HCT116 (cell line): ENCODE measurements at regions of chr9 and their contacts with region 1.

Region 1: DNA sequence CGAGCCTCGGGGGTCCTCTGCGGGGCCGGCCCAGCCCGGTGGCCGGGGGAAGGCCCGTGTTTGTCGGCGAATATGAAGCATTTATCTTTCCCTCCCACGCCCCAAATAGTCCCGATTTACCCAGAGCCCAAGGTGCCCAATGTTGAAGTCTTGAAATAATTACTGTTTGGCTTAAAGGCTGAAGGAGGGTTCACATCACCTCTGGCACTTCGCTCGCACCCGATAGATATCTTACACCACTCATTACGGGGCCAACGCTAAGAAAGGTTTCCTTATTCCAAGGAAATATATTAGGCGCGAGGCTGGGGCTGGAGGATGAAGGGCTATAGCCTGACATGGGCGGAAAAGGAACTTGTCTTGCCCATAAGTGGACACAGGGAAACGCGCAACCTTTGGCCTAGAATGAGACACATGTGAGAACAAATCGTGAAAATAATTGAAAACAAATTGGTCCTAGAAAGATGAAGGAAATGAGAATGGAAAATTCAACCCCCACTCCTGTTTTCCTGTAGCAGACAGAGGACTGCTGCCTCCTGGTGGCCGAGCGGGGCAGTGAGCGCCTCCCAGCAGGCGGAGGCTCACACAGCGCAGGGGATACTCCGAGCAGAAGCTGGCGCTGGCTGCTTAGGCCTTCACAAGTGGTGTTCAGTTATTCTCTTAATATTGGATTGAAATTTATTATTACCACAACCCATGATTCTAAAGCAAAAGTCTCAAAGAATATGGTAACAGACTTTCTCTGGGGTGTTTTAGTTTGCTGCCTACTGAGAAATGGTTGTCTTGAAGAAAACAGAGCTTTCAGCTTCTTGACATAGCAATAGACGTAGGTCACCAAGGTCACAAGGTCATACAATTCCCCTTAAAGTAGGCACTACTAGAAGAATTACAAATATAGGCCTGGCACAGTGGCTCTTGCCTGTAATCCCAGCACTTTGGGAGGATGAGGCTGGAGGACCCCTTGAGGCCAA is 7.9 kb downstream of the CCL21 start:
- DNase-seq: peak; percentile 48
- ATAC-seq: peak; percentile 83
- H3K4me3 ChIP-seq: peak overlapping the region; percentile 41 to 57
- H3K27ac ChIP-seq: no peak overlapping the region
- H3K4me1 ChIP-seq: peaks cover 3 to 14% of the 10 kb centered on the region in 2 experiments; a peak in 2 of 4 replicates
- H3K27me3 ChIP-seq: no peaks in the 10 kb centered on the region
- CTCF ChIP-seq: peak; percentile 96 to 99 (median 97)
- POLR2A ChIP-seq: no peak
- RAD21 ChIP-seq: peak; percentile 77

Region 2: DNA sequence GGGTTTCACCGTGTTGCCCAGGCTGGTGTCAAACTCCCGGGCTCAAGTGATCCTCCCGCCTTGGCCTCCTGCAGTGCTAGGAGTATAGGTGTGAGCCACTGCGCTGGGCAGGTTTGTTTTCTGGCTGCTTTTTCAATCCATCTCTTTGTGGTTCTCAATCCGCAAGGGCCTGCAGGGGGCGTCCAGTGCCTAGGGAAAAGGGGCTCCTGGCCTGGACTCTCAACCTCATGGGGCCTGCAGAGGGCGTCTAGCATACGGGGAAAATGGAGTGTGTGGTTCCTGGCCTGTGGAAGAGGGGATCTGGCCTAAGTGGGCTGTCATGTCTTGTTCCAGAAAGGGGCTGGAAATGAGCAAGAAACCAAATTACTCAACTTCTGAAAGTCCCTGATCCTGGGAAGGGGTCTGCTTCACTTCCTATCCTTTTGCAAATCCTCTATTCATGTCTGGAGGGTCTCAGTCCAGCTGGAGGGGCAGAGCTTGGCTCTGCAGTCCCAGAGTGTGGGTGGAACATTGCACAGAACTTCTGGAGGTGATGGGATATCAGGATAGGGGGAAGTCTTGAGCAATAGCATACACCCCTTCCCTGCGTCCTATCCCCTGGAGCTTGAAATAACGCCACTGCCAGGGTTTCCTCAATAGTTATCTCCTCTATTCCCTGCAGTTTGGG is 26.9 kb before region 1 on chr9:
- CTCF ChIA-PET with region 1: interaction called, 14 read pairs
- POLR2A ChIA-PET with region 1: no interaction called
- RAD21 ChIA-PET with region 1: no interaction called
- intact Hi-C with region 1: loop called (anchors 1 kb)
- DNase-seq: peak; percentile 60
- ATAC-seq: peak; percentile 99
- H3K4me3 ChIP-seq: no peak overlapping the region
- H3K27ac ChIP-seq: no peak overlapping the region
- H3K4me1 ChIP-seq: no peaks in the 10 kb centered on the region
- H3K27me3 ChIP-seq: no peaks in the 10 kb centered on the region
- CTCF ChIP-seq: peak; percentile 93 to 99 (median 96)
- POLR2A ChIP-seq: no peak
- RAD21 ChIP-seq: peak; percentile 83

Region 3: GRCh38 chr9:34715639-34716215 is 13.7 kb after region 1 on chr9:
- CTCF ChIA-PET with region 1: interaction called, 14 read pairs
- POLR2A ChIA-PET with region 1: no interaction called
- RAD21 ChIA-PET with region 1: no interaction called
- intact Hi-C with region 1: no loop called
- DNase-seq: no peak
- ATAC-seq: no peak
- H3K4me3 ChIP-seq: no peak overlapping the region
- H3K27ac ChIP-seq: no peak overlapping the region
- H3K4me1 ChIP-seq: no peaks in the 10 kb centered on the region
- H3K27me3 ChIP-seq: peaks cover 23% of the 10 kb centered on the region
- CTCF ChIP-seq: no peak
- POLR2A ChIP-seq: no peak
- RAD21 ChIP-seq: no peak

Region 4: GRCh38 chr9:34974664-34975063 is 272.6 kb after region 1 on chr9:
- CTCF ChIA-PET with region 1: no interaction called
- POLR2A ChIA-PET with region 1: no interaction called
- RAD21 ChIA-PET with region 1: no interaction called
- intact Hi-C with region 1: no loop called
- DNase-seq: no peak
- ATAC-seq: no peak
- H3K4me3 ChIP-seq: no peak overlapping the region
- H3K27ac ChIP-seq: no peak overlapping the region
- H3K4me1 ChIP-seq: no peaks in the 10 kb centered on the region
- H3K27me3 ChIP-seq: peaks cover 30% of the 10 kb centered on the region
- CTCF ChIP-seq: no peak
- POLR2A ChIP-seq: no peak
- RAD21 ChIP-seq: no peak